Posterior cingulate gyrus (tissue), 11 donors: ENCODE measurements at regions of chr3 and their contacts with region 1.

Region 1: GRCh38 chr3:64484289-64484992 is 203.4 kb downstream of the ADAMTS9 start:
- DNase-seq: peak; percentile 67 to 98 (median 92)

Region 2: GRCh38 chr3:64187065-64187959 is 297.1 kb before region 1 on chr3:
- intact Hi-C with region 1: loop called (anchors 10 kb)
- DNase-seq: peak in 8 of 10 donors; percentile 25 to 90 (median 42)

Region 3: DNA sequence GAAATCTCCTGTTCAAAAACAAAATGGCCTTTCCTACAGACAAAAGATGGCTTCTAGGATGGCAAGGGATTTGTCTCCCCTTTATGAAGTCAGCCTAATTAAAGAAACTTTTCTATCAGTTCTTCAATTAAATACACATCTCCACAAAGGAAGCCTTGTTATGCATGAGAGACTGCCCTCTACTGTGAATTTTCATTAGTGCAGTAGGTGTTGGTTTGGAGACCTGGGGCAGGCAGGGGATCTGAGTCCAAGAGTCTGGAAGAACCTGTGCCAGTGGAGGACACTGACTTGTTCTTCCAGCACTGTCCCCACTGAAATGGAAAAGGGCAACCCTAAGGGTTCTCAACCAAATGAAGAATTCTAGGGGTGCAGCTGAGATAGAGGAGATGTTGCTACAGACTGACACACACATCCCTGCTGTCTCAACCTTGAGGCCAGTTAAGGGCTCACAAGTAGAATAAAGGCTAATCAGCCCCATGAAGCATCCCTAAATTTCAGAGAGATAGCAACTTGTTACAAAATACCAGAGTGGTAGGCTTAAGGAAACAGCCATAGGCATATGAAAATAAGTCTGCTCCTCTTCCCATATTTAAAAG is 85.1 kb before region 1 on chr3:
- intact Hi-C with region 1: loop called (anchors 1 kb)
- DNase-seq: peak in 2 of 10 donors; percentile 21 to 27

Region 4: DNA sequence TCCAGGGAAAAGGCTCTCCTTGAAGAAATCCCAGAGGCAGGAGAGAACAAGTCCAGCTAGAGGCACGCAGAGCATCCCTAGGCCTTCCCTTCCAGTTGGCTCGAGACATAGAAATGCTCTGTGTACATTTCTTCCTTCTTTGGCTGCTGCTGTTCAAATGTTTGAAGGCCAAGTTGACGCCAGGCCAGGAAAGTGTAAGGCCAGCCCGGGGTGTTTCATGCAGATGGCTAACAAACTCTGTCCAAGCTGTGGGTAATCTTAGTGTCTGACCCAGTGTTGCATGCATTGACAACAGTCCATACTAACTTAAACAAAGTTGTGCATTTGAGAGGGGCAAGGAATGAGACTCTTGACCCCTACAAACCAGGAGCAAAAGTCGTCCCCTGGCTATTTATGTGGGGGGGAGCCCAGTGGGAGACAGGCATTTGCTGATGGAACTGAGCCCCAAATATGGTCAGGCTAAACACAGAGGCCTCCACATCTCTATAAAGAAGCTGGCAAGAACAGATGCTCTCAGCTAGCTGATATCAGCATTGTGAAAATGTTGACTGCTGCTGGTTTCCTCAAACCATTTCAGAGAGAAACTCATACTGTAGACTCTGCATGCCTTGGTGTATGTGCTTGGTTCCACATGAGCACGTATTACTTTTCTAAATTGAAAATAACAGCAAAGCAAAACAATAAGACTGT is 63.9 kb after region 1 on chr3:
- intact Hi-C with region 1: no loop called
- DNase-seq: peak in 2 of 10 donors; percentile 16 to 72